ENCODE measurements at regions of chr2 and their contacts with region 1.

Region 1: DNA sequence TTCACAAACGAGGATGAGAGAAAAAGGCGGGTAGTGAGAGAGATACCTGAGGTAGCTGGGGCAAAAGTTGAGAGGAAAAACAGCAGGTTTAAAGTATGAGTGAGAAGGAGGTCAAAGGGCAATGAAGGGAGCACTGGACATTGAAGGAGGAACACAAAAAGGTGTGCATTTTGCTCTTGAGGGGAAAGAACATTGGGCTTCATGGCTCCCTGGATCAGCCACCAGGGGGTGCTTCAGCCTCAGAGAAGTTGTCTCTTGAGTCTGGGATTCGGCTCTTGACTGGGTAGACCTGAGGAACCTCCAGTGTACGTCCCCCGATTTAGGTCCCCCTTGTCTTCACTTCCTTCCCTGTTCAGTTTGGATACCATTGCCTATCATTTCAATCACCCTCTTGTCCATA is 128.5 kb downstream of the RAPGEF4 start:
- DNase-seq: peak in 5 of 6 donors; percentile 29 to 67 (median 50)
- ATAC-seq: peak; percentile 69 to 85 (median 76)
- H3K4me3 ChIP-seq: no peak overlapping the region
- H3K27ac ChIP-seq: no peak overlapping the region
- H3K4me1 ChIP-seq: peaks cover 0 to 13% (median 5%) of the 10 kb centered on the region in 3 donors
- H3K27me3 ChIP-seq: no peaks in the 10 kb centered on the region
- CTCF ChIP-seq: peak in 3 of 4 donors; percentile 26 to 42 (median 37)

Region 2: GRCh38 chr2:172919732-172920131 is 55.5 kb after region 1 on chr2:
- intact Hi-C with region 1: loop called in 1 of 3 experiments (anchors 10 kb)
- DNase-seq: no peak
- ATAC-seq: no peak
- H3K4me3 ChIP-seq: no peak overlapping the region
- H3K27ac ChIP-seq: no peak overlapping the region
- H3K4me1 ChIP-seq: peaks cover 0 to 4% (median 0%) of the 10 kb centered on the region in 3 donors
- H3K27me3 ChIP-seq: no peaks in the 10 kb centered on the region
- CTCF ChIP-seq: no peak

Measured in pancreas (tissue), 10 donors.